ENCODE measurements at regions of chr6 and their contacts with region 1.

Region 1: DNA sequence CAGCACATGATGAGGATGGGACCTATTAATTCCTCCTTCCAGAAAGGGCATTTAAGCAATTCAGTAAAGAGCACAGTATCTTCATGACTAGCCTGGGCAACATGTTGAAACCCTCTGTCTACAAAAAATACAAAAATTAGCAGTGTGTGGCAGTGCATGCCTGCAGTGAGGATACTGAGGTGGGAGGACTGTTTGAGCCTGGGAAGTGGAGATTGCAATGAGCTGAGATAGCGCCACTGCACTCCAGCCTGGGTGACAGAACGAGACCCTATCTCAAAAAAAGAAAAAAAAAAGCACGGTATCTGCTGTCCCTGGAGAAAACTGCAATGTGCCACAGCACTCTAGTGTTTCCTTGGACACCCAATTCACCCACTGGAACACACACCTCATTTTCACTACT is 18.4 kb downstream of the SAMD3 start:
- DNase-seq: no peak
- ATAC-seq: no peak
- H3K4me3 ChIP-seq: no peak overlapping the region
- H3K27ac ChIP-seq: no peak overlapping the region
- H3K4me1 ChIP-seq: no peaks in the 10 kb centered on the region
- H3K27me3 ChIP-seq: peaks cover 1 to 3% of the 10 kb centered on the region in 2 experiments; a peak in 2 of 5 replicates
- CTCF ChIP-seq: no peak
- EP300 ChIP-seq: no peak
- POLR2A ChIP-seq: no peak
- RAD21 ChIP-seq: no peak

Region 2: GRCh38 chr6:130167655-130168054 is 36.7 kb before region 1 on chr6:
- CTCF ChIA-PET with region 1: no interaction called
- POLR2A ChIA-PET with region 1: no interaction called
- in situ Hi-C with region 1: no loop called
- intact Hi-C with region 1: no loop called
- DNase-seq: no peak
- ATAC-seq: no peak
- H3K4me3 ChIP-seq: no peak overlapping the region
- H3K27ac ChIP-seq: no peak overlapping the region
- H3K4me1 ChIP-seq: no peaks in the 10 kb centered on the region
- H3K27me3 ChIP-seq: no peaks in the 10 kb centered on the region; a peak in 1 of 5 replicates
- CTCF ChIP-seq: no peak
- EP300 ChIP-seq: no peak
- POLR2A ChIP-seq: no peak
- RAD21 ChIP-seq: no peak

Region 3: GRCh38 chr6:130269969-130270635 is 65.8 kb after region 1 on chr6:
- CTCF ChIA-PET with region 1: no interaction called
- POLR2A ChIA-PET with region 1: no interaction called
- in situ Hi-C with region 1: no loop called
- intact Hi-C with region 1: loop called (anchors 2 kb)
- DNase-seq: no peak
- ATAC-seq: no peak
- H3K4me3 ChIP-seq: no peak overlapping the region
- H3K27ac ChIP-seq: no peak overlapping the region
- H3K4me1 ChIP-seq: no peaks in the 10 kb centered on the region
- H3K27me3 ChIP-seq: no peaks in the 10 kb centered on the region
- CTCF ChIP-seq: no peak
- EP300 ChIP-seq: no peak
- POLR2A ChIP-seq: no peak
- RAD21 ChIP-seq: no peak

Region 4: GRCh38 chr6:130293800-130294199 is 89.5 kb after region 1 on chr6:
- CTCF ChIA-PET with region 1: no interaction called
- POLR2A ChIA-PET with region 1: no interaction called
- in situ Hi-C with region 1: no loop called
- intact Hi-C with region 1: no loop called
- DNase-seq: peak; percentile 23
- ATAC-seq: peak; percentile 89
- H3K4me3 ChIP-seq: no peak overlapping the region
- H3K27ac ChIP-seq: no peak overlapping the region
- H3K4me1 ChIP-seq: no peaks in the 10 kb centered on the region
- H3K27me3 ChIP-seq: no peaks in the 10 kb centered on the region
- CTCF ChIP-seq: peak; percentile 61
- EP300 ChIP-seq: no peak
- POLR2A ChIP-seq: no peak
- RAD21 ChIP-seq: no peak

Measured in HepG2 (cell line).